Activated CD4-positive, alpha-beta memory T cell treated with anti-CD3 and anti-CD28 coated beads for 36 hours (primary cell): ENCODE measurements at regions of chr20 and their contacts with region 1.

Region 1: GRCh38 chr20:20498076-20498861 is 130.4 kb downstream of the INSM1 start:
- DNase-seq: no peak
- H3K4me3 Mint-ChIP-seq: no peak overlapping the region
- H3K27ac Mint-ChIP-seq: peak overlapping the region; percentile 84
- H3K4me1 Mint-ChIP-seq: peaks cover 62% of the 10 kb centered on the region
- H3K27me3 Mint-ChIP-seq: no peaks in the 10 kb centered on the region

Region 2: GRCh38 chr20:19735446-19735845 is 762.8 kb before region 1 on chr20:
- CTCF ChIA-PET with region 1: no interaction called
- POLR2A ChIA-PET with region 1: no interaction called
- intact Hi-C with region 1: loop called (anchors 5 kb)
- DNase-seq: peak; percentile 70
- H3K4me3 Mint-ChIP-seq: no peak overlapping the region
- H3K27ac Mint-ChIP-seq: peak overlapping the region; percentile 7
- H3K4me1 Mint-ChIP-seq: peaks cover 19% of the 10 kb centered on the region
- H3K27me3 Mint-ChIP-seq: peaks cover 8% of the 10 kb centered on the region

Region 3: GRCh38 chr20:20184149-20184548 is 314.1 kb before region 1 on chr20:
- CTCF ChIA-PET with region 1: no interaction called
- POLR2A ChIA-PET with region 1: no interaction called
- intact Hi-C with region 1: no loop called
- DNase-seq: peak; percentile 17
- H3K4me3 Mint-ChIP-seq: no peak overlapping the region
- H3K27ac Mint-ChIP-seq: no peak overlapping the region
- H3K4me1 Mint-ChIP-seq: no peaks in the 10 kb centered on the region
- H3K27me3 Mint-ChIP-seq: peaks cover 6% of the 10 kb centered on the region

Region 4: DNA sequence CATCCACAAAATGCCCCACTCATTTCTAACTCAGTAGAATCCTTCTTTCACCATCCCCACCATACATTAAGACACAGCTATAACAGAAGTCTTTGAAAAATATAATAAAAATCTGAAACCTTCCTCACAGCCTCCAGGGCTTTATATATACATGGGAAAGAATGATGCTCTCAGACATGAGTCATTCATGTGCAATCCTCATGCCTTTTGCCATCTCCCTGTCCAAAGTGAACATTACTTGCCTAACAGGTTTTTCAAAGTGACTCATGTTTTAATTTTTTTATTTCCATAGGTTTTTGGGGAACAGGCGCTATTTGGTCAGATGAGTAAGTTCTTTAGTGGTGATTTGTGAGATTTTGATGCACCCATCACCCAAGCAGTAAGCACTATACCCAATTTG is 51.4 kb after region 1 on chr20:
- CTCF ChIA-PET with region 1: interaction called, 4 read pairs
- POLR2A ChIA-PET with region 1: interaction called, 4 read pairs
- intact Hi-C with region 1: loop called (anchors 1 kb)
- DNase-seq: no peak
- H3K4me3 Mint-ChIP-seq: no peak overlapping the region
- H3K27ac Mint-ChIP-seq: no peak overlapping the region
- H3K4me1 Mint-ChIP-seq: peaks cover 39% of the 10 kb centered on the region
- H3K27me3 Mint-ChIP-seq: no peaks in the 10 kb centered on the region

Region 5: GRCh38 chr20:20814685-20815084 is 316.4 kb after region 1 on chr20:
- CTCF ChIA-PET with region 1: no interaction called
- POLR2A ChIA-PET with region 1: no interaction called
- intact Hi-C with region 1: no loop called
- DNase-seq: no peak
- H3K4me3 Mint-ChIP-seq: no peak overlapping the region
- H3K27ac Mint-ChIP-seq: no peak overlapping the region
- H3K4me1 Mint-ChIP-seq: no peaks in the 10 kb centered on the region
- H3K27me3 Mint-ChIP-seq: peaks cover 4% of the 10 kb centered on the region